ENCODE measurements at regions of chr5 and their contacts with region 1.

Region 1: GRCh38 chr5:141968914-141969608 is at the start of gene RNF14:
- DNase-seq: peak; percentile 99
- H3K4me3 Mint-ChIP-seq: peak within 1 kb of the TSS; percentile 89
- H3K27ac Mint-ChIP-seq: peak within 1 kb of the TSS; percentile 98
- H3K4me1 Mint-ChIP-seq: peaks cover 34% of the 10 kb centered on the region
- H3K27me3 Mint-ChIP-seq: no peaks in the 10 kb centered on the region
- total RNA-seq, gene RNF14: 28.8 and 32.2 TPM in 2 replicates

Region 2: GRCh38 chr5:141650851-141651727 is 318.0 kb before region 1 on chr5 and contains the start of gene FCHSD1:
- intact Hi-C with region 1: loop called (anchors 1 kb)
- DNase-seq: peak; percentile 94
- H3K4me3 Mint-ChIP-seq: peak within 1 kb of the TSS; percentile 92
- H3K27ac Mint-ChIP-seq: peak within 1 kb of the TSS; percentile 93
- H3K4me1 Mint-ChIP-seq: peaks cover 28% of the 10 kb centered on the region
- H3K27me3 Mint-ChIP-seq: no peaks in the 10 kb centered on the region
- total RNA-seq, gene FCHSD1: 33.1 and 34.5 TPM in 2 replicates

Region 3: GRCh38 chr5:141923448-141924352 is 45.4 kb before region 1 on chr5 and contains the start of gene DELE1:
- intact Hi-C with region 1: loop called (anchors 1 kb)
- DNase-seq: peak; percentile 97
- H3K4me3 Mint-ChIP-seq: peak within 1 kb of the TSS; percentile 86
- H3K27ac Mint-ChIP-seq: peak within 1 kb of the TSS; percentile 87
- H3K4me1 Mint-ChIP-seq: peaks cover 31% of the 10 kb centered on the region
- H3K27me3 Mint-ChIP-seq: no peaks in the 10 kb centered on the region
- total RNA-seq, gene DELE1: 66.7 and 72.0 TPM in 2 replicates

Region 4: DNA sequence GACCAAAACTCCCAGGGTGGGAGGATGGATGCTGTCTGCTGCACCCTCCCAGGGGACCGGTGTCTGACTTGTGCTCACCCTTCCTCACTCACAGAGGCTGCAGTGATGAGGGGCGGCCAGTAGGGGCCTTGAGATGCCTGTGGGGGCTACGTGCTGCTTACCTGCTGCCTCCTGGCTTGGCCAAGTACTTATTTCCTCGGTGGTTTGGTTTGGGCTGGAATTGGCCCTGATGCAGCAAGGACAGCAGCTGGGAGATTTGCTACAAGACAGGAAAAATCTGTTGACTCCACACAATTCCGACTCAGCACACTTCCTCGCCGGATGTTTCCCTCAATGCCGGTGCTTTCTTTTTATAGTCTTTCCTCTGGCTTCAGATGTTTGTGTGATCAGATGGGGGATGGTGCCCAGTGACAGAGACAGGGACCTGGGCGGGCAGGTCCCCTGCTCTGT is 17.7 kb before region 1 on chr5:
- intact Hi-C with region 1: no loop called
- DNase-seq: peak; percentile 73
- H3K4me3 Mint-ChIP-seq: no peak overlapping the region
- H3K27ac Mint-ChIP-seq: peak overlapping the region; percentile 4
- H3K4me1 Mint-ChIP-seq: peaks cover 20% of the 10 kb centered on the region
- H3K27me3 Mint-ChIP-seq: no peaks in the 10 kb centered on the region

Region 5: GRCh38 chr5:141992349-141992963 is 23.4 kb after region 1 on chr5:
- intact Hi-C with region 1: loop called (anchors 1 kb)
- DNase-seq: peak; percentile 93
- H3K4me3 Mint-ChIP-seq: no peak overlapping the region
- H3K27ac Mint-ChIP-seq: no peak overlapping the region
- H3K4me1 Mint-ChIP-seq: peaks cover 3% of the 10 kb centered on the region
- H3K27me3 Mint-ChIP-seq: no peaks in the 10 kb centered on the region

Region 6: DNA sequence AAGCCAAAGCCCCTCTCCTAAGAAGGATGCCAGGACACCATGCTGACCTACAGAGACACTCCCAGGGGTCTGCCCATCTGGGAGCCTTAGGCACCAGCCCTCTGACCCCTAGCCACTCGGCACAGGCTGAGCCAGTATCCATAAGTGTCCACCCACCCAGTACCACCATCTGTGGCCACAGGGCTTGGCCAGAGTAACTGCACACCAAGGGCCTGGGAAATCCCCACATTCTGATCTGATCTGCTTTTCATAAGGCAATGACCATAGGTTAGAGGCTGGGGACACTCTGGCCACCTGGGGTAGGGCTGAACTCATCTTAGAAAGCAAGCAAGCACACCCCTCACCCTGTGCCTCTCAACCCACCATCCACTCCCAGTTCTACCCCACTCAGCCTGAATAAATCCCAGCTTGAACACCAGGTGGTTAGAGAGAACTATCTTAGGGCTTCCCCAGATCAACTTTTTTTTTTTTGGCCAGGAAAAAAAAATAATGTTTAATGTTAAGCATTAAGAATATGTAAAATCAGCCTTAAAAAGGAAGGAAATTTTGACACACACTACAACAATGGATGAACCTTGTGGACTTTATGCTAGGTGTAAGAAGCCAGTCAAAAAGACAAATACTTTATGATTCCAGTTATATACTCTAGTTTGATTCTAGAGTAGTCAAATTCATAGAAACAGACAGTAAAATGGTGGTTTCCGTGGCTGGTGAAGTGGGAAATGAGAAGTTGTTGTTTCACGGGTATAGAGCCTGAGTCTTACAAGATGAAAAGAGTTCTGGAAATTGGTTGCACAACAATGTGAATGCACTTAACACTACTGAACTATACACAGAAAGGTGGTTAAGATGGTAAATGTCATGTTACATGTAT is 37.5 kb after region 1 on chr5:
- intact Hi-C with region 1: no loop called
- DNase-seq: peak; percentile 86
- H3K4me3 Mint-ChIP-seq: peak overlapping the region; percentile 80
- H3K27ac Mint-ChIP-seq: peak overlapping the region; percentile 96
- H3K4me1 Mint-ChIP-seq: peaks cover 69% of the 10 kb centered on the region
- H3K27me3 Mint-ChIP-seq: no peaks in the 10 kb centered on the region

Region 7: DNA sequence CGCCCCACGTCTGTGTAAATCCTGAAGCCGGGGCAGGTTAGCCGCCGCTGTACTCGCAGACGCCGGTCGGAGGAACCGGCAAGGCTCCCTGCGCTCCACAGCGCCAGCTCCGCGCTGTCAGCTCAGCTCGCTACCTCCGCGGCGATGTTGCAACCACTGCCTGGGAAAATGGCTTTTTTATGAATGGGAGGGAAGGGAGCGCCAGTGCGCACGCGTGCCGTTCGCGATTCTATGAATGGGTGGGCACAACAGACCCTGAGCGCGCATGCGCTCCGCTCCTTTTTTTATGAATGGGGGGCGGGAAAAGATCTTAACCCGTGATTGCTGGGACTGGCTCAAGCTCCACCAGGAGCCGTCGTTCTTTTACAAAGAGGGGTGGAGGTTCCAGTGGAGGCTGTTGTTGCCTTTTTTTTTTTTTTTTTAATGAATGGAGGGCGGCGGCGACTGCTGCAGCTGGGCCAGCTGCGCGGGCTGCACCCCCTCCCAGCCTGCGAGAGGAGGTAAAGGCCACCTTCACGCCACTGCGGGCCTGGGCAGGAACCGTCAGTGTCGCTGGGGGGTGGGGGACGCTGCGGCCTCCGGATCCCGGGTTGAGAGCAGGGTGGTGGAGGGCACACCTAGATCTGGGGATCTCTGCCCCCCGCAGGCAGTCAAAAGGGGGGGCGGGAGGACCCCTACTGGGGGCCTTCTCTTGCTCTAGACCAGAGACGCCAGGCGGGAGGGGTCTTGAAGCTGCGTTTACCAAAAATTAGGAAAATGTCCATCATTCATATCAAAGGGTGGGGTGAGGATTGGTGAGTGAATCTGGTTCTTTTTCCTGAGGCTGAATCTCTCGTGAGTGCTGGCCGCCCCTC is 356.0 kb after region 1 on chr5 and contains the start of gene SPRY4:
- intact Hi-C with region 1: loop called (anchors 5 kb)
- DNase-seq: peak; percentile 94
- H3K4me3 Mint-ChIP-seq: peak within 1 kb of the TSS; percentile 89
- H3K27ac Mint-ChIP-seq: peak within 1 kb of the TSS; percentile 80
- H3K4me1 Mint-ChIP-seq: peaks cover 32% of the 10 kb centered on the region
- H3K27me3 Mint-ChIP-seq: peaks cover 49% of the 10 kb centered on the region
- total RNA-seq, gene SPRY4: 1.4 and 1.5 TPM in 2 replicates

Region 8: DNA sequence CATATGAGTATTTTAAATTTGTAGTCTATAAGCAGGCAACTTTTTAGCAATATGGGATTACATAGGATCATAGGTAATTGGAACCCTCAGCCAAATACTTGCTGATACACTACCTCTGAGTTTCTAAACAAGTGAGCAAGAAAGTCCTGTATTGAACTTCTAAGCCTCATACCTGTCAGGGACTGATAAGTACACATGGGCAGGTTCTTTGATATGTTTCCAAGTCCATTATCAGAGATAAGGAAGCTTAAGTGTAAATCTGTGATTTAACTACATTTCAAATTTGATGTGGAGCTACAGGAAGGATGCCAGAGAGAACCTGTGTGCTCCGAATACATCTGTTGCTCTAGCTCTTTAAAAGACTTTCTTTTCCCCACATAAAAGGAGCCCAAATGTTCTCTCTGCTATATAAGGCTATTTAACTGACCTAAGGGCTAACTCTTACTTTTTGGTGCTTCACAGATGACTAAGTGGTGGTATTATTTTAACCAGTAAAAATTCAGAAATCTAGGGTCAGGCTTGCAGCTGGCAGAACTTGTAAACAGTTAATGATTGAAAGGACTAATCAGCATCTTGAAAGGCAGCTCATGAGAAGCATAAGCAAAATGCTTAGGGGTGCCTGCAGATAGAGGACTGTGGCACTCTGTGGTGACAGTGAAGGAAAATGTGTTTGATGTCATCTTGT is 1205.8 kb after region 1 on chr5:
- intact Hi-C with region 1: no loop called
- DNase-seq: no peak
- H3K4me3 Mint-ChIP-seq: no peak overlapping the region
- H3K27ac Mint-ChIP-seq: no peak overlapping the region
- H3K4me1 Mint-ChIP-seq: peaks cover 6% of the 10 kb centered on the region
- H3K27me3 Mint-ChIP-seq: no peaks in the 10 kb centered on the region